ENCODE measurements at regions of chr12 and their contacts with region 1.

Region 1: GRCh38 chr12:103503977-103504376 is 8.2 kb upstream of the C12orf42 start:
- DNase-seq: peak; percentile 48
- ATAC-seq: peak; percentile 23
- H3K4me3 Mint-ChIP-seq: no peak overlapping the region
- H3K27ac Mint-ChIP-seq: peak overlapping the region; percentile 95
- H3K4me1 Mint-ChIP-seq: peaks cover 56% of the 10 kb centered on the region
- H3K27me3 Mint-ChIP-seq: no peaks in the 10 kb centered on the region
- CTCF ChIP-seq: no peak

Region 2: GRCh38 chr12:102948941-102949352 is 555.0 kb before region 1 on chr12:
- CTCF ChIA-PET with region 1: interaction called, 41 read pairs
- POLR2A ChIA-PET with region 1: no interaction called
- intact Hi-C with region 1: loop called (anchors 1 kb)
- DNase-seq: peak; percentile 51
- ATAC-seq: peak; percentile 25
- H3K4me3 Mint-ChIP-seq: no peak overlapping the region
- H3K27ac Mint-ChIP-seq: no peak overlapping the region
- H3K4me1 Mint-ChIP-seq: peaks cover 13% of the 10 kb centered on the region
- H3K27me3 Mint-ChIP-seq: peaks cover 54% of the 10 kb centered on the region
- CTCF ChIP-seq: peak; percentile 100

Region 3: GRCh38 chr12:103326190-103326589 is 177.8 kb before region 1 on chr12:
- CTCF ChIA-PET with region 1: interaction called, 6 read pairs
- POLR2A ChIA-PET with region 1: no interaction called
- intact Hi-C with region 1: loop called (anchors 1 kb)
- DNase-seq: no peak
- ATAC-seq: peak; percentile 42
- H3K4me3 Mint-ChIP-seq: no peak overlapping the region
- H3K27ac Mint-ChIP-seq: no peak overlapping the region
- H3K4me1 Mint-ChIP-seq: no peaks in the 10 kb centered on the region
- H3K27me3 Mint-ChIP-seq: no peaks in the 10 kb centered on the region
- CTCF ChIP-seq: no peak

Region 4: DNA sequence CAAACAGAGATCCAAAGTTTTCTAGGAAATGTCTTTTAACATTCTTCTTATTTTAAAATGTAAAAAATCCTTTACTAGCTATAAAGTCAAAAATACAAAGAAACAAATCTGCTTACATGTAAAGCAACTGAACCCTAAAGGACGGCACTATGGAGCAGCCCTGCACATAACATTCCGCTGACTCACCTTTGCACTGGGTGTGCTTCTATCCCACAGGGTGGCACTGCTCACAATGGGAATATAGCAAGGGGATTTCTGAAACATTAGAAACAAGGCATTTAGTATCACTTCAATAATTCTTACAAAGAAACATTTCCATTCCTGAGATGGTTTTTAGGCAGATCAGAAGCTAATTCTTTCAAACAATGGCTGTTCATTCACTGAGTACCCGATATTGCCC is 102.6 kb before region 1 on chr12:
- CTCF ChIA-PET with region 1: interaction called, 4 read pairs
- POLR2A ChIA-PET with region 1: no interaction called
- intact Hi-C with region 1: loop called (anchors 1 kb)
- DNase-seq: no peak
- ATAC-seq: no peak
- H3K4me3 Mint-ChIP-seq: no peak overlapping the region
- H3K27ac Mint-ChIP-seq: no peak overlapping the region
- H3K4me1 Mint-ChIP-seq: peaks cover 15% of the 10 kb centered on the region
- H3K27me3 Mint-ChIP-seq: no peaks in the 10 kb centered on the region
- CTCF ChIP-seq: no peak

Region 5: DNA sequence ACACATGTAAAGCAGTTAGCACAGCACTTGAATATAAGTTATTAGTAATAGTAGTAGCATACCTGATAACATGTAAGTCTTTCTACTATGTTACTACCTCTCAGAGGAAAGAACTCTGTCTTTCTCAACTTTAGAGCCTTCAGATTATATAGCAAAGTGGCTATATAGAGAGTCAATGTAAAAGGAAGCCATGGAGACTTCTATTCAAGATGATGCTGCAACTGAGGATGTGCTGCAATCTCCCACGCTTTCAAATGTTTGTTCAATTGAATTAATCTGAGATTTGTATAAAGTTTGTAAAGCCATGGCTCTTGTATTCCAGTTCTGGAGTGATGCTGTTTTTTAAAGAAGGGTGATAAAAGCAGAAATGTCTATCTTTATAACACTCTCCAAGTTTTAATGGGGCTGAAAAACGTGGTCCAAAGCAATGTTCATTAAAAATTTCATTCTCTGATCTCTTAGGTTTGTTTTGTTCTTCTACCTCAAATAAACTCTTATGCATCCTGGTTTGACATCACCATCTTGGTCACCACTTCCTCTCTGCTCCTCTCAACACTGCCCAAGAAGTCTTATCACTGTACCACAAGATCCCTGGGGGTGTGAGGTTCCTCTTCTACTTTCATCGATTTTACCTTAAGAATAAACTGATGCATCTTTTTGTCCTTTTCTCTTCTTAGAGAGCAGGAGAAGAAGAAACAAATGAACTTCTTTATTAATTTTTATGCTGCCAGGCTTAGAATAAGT is 48.8 kb before region 1 on chr12:
- CTCF ChIA-PET with region 1: no interaction called
- POLR2A ChIA-PET with region 1: no interaction called
- intact Hi-C with region 1: loop called (anchors 1 kb)
- DNase-seq: no peak
- ATAC-seq: peak; percentile 98
- H3K4me3 Mint-ChIP-seq: peak overlapping the region; percentile 26
- H3K27ac Mint-ChIP-seq: peak overlapping the region; percentile 70
- H3K4me1 Mint-ChIP-seq: peaks cover 46% of the 10 kb centered on the region
- H3K27me3 Mint-ChIP-seq: no peaks in the 10 kb centered on the region
- CTCF ChIP-seq: no peak

Region 6: DNA sequence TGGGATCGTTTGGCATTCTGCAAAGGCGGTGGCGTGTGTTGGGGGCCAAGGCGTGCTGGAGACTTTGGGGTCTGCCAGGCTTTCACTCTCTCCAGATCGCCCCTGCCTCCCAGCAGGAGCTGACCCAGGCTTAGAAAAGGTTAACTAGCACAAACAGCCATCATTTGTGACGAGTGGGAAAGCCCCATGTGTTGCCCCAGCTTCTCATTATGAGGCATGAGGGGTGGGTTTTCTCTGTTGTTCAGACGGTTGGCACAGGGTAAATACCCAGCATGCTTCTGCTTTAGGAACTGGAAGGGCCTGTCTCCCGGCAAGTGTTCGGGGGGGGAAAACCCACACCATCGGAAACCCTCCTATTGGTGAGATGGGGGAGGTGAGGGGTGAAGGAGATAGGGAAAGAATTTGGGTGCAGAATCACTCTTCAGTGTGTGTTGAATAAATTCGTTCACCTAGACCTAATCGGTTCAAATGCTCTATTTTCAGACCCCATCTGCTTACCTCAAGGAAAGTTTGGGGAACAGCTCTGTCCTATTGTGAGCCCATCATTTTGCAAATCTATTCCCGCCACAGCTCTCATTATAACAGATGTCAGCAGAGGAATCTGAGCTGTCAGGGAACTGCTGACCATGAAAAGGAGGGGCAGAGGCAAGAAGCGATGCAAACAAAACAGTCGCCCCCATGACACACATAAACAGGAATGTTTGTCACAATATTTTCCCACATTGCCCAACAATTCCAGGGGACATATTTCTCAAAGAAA is 26.5 kb after region 1 on chr12:
- CTCF ChIA-PET with region 1: interaction called, 3 read pairs
- POLR2A ChIA-PET with region 1: interaction called, 14 read pairs
- intact Hi-C with region 1: loop called (anchors 1 kb)
- DNase-seq: no peak
- ATAC-seq: peak; percentile 80
- H3K4me3 Mint-ChIP-seq: peak overlapping the region; percentile 58
- H3K27ac Mint-ChIP-seq: peak overlapping the region; percentile 72
- H3K4me1 Mint-ChIP-seq: peaks cover 25% of the 10 kb centered on the region
- H3K27me3 Mint-ChIP-seq: no peaks in the 10 kb centered on the region
- CTCF ChIP-seq: no peak

Measured in activated B cell treated with CpG ODN at 0.5 μM for 24 hours (primary cell).